HCT116 (cell line): ENCODE measurements at regions of chr4 and their contacts with region 1.

Region 1: GRCh38 chr4:94127707-94128328 is 79.8 kb upstream of the SMARCAD1 start:
- DNase-seq: peak; percentile 50
- ATAC-seq: peak; percentile 78
- H3K4me3 ChIP-seq: no peak overlapping the region
- H3K27ac ChIP-seq: no peak overlapping the region
- H3K4me1 ChIP-seq: no peaks in the 10 kb centered on the region
- H3K27me3 ChIP-seq: no peaks in the 10 kb centered on the region
- CTCF ChIP-seq: peak; percentile 48 to 79 (median 58); a peak in 4 of 6 replicates
- POLR2A ChIP-seq: no peak
- RAD21 ChIP-seq: peak; percentile 67

Region 2: DNA sequence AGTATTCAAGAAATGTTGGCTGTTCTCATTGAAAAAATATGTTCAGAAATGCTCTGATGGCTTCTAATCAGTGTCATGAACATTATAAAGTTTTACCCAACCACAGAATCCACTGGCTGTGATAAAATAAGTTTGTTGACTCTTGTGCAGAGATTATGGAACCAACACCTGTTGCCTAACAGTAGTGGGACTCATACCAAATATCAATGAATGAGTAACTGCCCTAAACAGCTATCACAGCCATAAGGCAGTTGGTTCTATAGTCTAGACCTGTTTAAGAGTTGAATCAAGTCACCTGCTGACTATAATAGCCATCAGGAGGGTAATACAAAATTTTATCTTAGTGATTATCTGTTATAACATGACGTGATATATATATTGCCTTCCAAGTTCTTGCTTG is 130.9 kb before region 1 on chr4:
- CTCF ChIA-PET with region 1: no interaction called
- POLR2A ChIA-PET with region 1: no interaction called
- RAD21 ChIA-PET with region 1: no interaction called
- intact Hi-C with region 1: loop called (anchors 5 kb)
- DNase-seq: no peak
- ATAC-seq: no peak
- H3K4me3 ChIP-seq: no peak overlapping the region
- H3K27ac ChIP-seq: no peak overlapping the region
- H3K4me1 ChIP-seq: no peaks in the 10 kb centered on the region
- H3K27me3 ChIP-seq: no peaks in the 10 kb centered on the region
- CTCF ChIP-seq: no peak
- POLR2A ChIP-seq: no peak
- RAD21 ChIP-seq: no peak